H1 (cell line): ENCODE measurements at regions of chr3 and their contacts with region 1.

Region 1: GRCh38 chr3:197368330-197368729 is 69.9 kb upstream of the DLG1 start:
- DNase-seq: no peak
- H3K4me3 ChIP-seq: no peak overlapping the region
- H3K27ac ChIP-seq: no peak overlapping the region
- H3K4me1 ChIP-seq: peaks cover 3 to 19% (median 12%) of the 10 kb centered on the region in 4 experiments; a peak in 6 of 7 replicates
- H3K27me3 ChIP-seq: no peaks in the 10 kb centered on the region; a peak in 1 of 7 replicates
- CTCF ChIP-seq: no peak
- EP300 ChIP-seq: no peak
- POLR2A ChIP-seq: no peak
- RAD21 ChIP-seq: no peak

Region 2: GRCh38 chr3:197309528-197310361 is 58.6 kb before region 1 on chr3:
- CTCF ChIA-PET with region 1: no interaction called
- POLR2A ChIA-PET with region 1: no interaction called
- DNase-seq: no peak
- H3K4me3 ChIP-seq: no peak overlapping the region
- H3K27ac ChIP-seq: no peak overlapping the region
- H3K4me1 ChIP-seq: peaks cover 0 to 7% (median 4%) of the 10 kb centered on the region in 4 experiments; a peak in 4 of 7 replicates
- H3K27me3 ChIP-seq: no peaks in the 10 kb centered on the region
- CTCF ChIP-seq: no peak
- EP300 ChIP-seq: no peak
- POLR2A ChIP-seq: no peak
- RAD21 ChIP-seq: no peak

Region 3: DNA sequence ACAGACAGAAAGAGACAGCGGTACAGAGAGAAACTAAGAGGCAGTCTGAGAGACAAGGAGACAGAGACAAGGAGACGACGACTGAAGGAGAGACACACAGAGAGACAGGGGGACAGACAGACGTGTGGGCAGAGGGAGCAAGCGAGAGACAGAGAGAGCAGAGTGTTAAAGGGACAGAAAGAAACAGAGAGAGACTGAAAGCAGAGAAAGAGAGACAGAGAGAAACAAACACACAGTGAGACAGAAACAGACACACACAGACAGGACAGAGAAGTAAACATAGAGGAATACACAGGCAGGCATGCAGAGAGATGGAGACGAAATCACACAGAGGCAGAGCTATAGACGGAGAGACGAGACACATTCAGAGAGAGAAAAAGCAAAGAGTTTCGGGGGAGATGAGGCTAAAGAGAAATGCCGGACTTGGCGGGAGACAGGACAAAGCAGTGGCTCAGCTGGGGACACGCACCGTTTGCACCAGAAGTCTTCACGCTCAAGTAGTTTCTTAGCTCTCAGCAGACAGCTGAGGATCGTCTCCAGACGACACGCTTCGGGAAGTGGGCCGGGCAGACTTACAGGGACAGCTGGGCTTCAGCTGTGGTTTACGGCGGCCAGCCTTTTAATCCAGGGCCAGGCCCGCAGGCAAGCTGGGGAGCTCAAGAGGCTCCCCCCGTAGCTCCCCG is 13.9 kb before region 1 on chr3:
- CTCF ChIA-PET with region 1: interaction called, 12 read pairs
- POLR2A ChIA-PET with region 1: no interaction called
- DNase-seq: no peak
- H3K4me3 ChIP-seq: no peak overlapping the region
- H3K27ac ChIP-seq: no peak overlapping the region
- H3K4me1 ChIP-seq: peaks cover 0 to 6% (median 2%) of the 10 kb centered on the region in 4 experiments; a peak in 4 of 7 replicates
- H3K27me3 ChIP-seq: no peaks in the 10 kb centered on the region; a peak in 1 of 7 replicates
- CTCF ChIP-seq: no peak
- EP300 ChIP-seq: no peak
- POLR2A ChIP-seq: no peak
- RAD21 ChIP-seq: no peak

Region 4: DNA sequence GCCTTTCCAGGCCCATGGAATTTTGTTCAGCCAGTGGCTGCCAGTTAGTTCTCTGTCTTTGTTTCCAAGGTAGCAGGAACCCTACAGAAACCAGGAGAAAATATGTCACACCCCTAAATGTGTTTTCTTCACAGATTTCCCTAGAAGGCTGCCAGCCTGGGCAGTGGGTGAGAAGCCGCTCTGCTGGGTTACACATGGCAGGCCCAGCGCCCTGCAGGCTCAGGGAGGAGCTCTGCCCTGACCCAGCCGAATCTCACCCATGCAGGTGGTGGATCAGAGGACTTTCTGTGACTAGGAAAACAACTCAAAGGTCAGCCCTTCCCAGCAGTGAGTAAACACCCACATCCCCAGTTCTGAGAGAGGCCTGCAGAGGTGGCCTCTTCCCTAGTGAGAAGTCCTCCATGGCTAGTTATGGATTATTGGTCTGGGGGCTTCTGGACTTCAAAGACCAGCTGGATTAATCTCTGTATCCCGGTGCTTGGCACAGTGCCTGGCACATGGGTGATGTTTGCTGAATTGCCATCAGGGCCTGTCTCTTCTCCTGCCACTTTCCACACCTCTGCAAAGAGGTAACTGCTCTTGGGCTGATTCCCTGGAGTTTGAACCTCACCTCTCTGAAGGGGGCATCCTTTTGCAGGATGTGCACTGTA is 222.1 kb after region 1 on chr3:
- CTCF ChIA-PET with region 1: no interaction called
- POLR2A ChIA-PET with region 1: no interaction called
- DNase-seq: no peak
- H3K4me3 ChIP-seq: no peak overlapping the region
- H3K27ac ChIP-seq: no peak overlapping the region
- H3K4me1 ChIP-seq: peaks cover 0 to 3% (median under 1%) of the 10 kb centered on the region in 4 experiments; a peak in 2 of 7 replicates
- H3K27me3 ChIP-seq: no peaks in the 10 kb centered on the region
- CTCF ChIP-seq: no peak
- EP300 ChIP-seq: no peak
- POLR2A ChIP-seq: no peak
- RAD21 ChIP-seq: no peak